ENCODE measurements at regions of chr4 and their contacts with region 1.

Region 1: GRCh38 chr4:175560604-175561003 is 251.5 kb downstream of the GPM6A start:
- DNase-seq: no peak
- ATAC-seq: peak; percentile 46; the same call in 2 of the 3 replicates
- H3K4me3 ChIP-seq: no peak overlapping the region
- H3K27ac ChIP-seq: no peak overlapping the region
- H3K4me1 ChIP-seq: no peaks in the 10 kb centered on the region
- H3K27me3 ChIP-seq: no peaks in the 10 kb centered on the region
- CTCF ChIP-seq: peak in 2 of 3 experiments; percentile 13 to 50; a peak in 2 of 6 replicates
- EP300 ChIP-seq: no peak
- POLR2A ChIP-seq: no peak
- RAD21 ChIP-seq: peak; percentile 66

Region 2: DNA sequence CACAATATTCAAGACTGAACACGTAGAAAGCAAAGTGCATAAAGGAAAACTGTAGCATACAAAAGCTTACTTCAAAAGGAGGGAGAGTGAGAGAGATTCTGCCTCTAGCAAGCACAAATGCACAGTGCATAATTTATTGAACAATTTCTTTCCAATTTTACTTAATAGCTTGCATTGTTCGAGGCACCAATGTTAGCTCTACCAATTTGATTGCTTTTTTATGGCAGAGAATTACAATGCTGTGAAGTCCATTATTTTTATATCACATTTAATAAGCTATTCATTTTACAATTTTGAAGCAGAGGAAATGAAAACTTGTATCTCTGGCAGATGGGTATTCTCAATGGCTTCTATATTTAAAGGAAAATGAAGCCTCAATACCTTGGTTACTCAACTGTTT is 80.2 kb before region 1 on chr4:
- CTCF ChIA-PET with region 1: no interaction called
- POLR2A ChIA-PET with region 1: no interaction called
- RAD21 ChIA-PET with region 1: no interaction called
- SMC1A ChIA-PET with region 1: no interaction called
- in situ Hi-C with region 1: no loop called
- intact Hi-C with region 1: no loop called
- DNase-seq: no peak
- ATAC-seq: no peak
- H3K4me3 ChIP-seq: no peak overlapping the region
- H3K27ac ChIP-seq: no peak overlapping the region
- H3K4me1 ChIP-seq: no peaks in the 10 kb centered on the region
- H3K27me3 ChIP-seq: no peaks in the 10 kb centered on the region
- CTCF ChIP-seq: no peak
- EP300 ChIP-seq: no peak
- POLR2A ChIP-seq: no peak
- RAD21 ChIP-seq: no peak

Region 3: GRCh38 chr4:175691791-175692190 is 131.2 kb after region 1 on chr4:
- CTCF ChIA-PET with region 1: no interaction called
- POLR2A ChIA-PET with region 1: no interaction called
- RAD21 ChIA-PET with region 1: no interaction called
- SMC1A ChIA-PET with region 1: no interaction called
- in situ Hi-C with region 1: no loop called
- intact Hi-C with region 1: no loop called
- DNase-seq: no peak
- ATAC-seq: no peak
- H3K4me3 ChIP-seq: no peak overlapping the region
- H3K27ac ChIP-seq: no peak overlapping the region
- H3K4me1 ChIP-seq: no peaks in the 10 kb centered on the region
- H3K27me3 ChIP-seq: no peaks in the 10 kb centered on the region
- CTCF ChIP-seq: no peak
- EP300 ChIP-seq: no peak
- POLR2A ChIP-seq: no peak
- RAD21 ChIP-seq: no peak

Region 4: GRCh38 chr4:175891851-175892250 is 331.2 kb after region 1 on chr4:
- CTCF ChIA-PET with region 1: interaction called, 4 read pairs
- POLR2A ChIA-PET with region 1: no interaction called
- RAD21 ChIA-PET with region 1: interaction called, 5 read pairs
- SMC1A ChIA-PET with region 1: interaction called, 10 read pairs
- in situ Hi-C with region 1: loop called (anchors 25 kb)
- intact Hi-C with region 1: loop called (anchors 1 kb)
- DNase-seq: no peak
- ATAC-seq: peak; percentile 65
- H3K4me3 ChIP-seq: no peak overlapping the region
- H3K27ac ChIP-seq: no peak overlapping the region
- H3K4me1 ChIP-seq: no peaks in the 10 kb centered on the region
- H3K27me3 ChIP-seq: no peaks in the 10 kb centered on the region
- CTCF ChIP-seq: peak in 2 of 3 experiments; percentile 24 to 51; a peak in 3 of 6 replicates
- EP300 ChIP-seq: no peak
- POLR2A ChIP-seq: no peak
- RAD21 ChIP-seq: peak; percentile 61

Measured in GM12878 (cell line).